ENCODE measurements at regions of chr10 and their contacts with region 1.

Region 1: DNA sequence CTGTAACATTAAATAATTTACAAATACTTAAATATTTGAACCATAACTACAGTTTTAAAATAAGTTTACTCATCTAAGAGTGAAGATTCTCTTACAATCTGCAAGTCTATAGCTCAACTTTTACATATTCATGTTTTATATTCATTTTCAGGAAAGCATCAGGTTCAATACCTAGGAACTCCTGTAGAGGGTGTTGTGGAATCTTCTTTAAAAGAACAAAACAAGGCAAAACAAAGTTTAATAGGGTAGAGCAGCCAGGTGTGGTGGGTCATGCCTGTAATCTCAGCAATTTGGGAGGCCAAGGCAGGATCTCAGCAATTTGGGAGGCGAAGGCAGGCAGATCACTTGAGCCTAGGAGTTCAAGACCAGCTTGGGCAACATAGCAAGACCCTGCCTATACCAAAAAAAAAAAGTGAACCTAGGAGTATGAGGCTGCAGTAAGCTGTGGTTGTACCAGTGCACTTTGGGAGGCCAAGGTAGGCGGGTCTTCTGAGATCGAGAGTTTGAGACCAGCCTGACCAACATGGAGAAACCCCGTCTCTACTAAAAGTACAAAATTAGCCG is 45.1 kb downstream of the ST8SIA6 start:
- DNase-seq: peak in 3 of 9 experiments; percentile 49 to 64 (median 56)
- ATAC-seq: peak; percentile 73
- H3K4me3 ChIP-seq: no peak overlapping the region
- H3K4me3 Mint-ChIP-seq: no peak overlapping the region
- H3K27ac ChIP-seq: no peak overlapping the region
- H3K27ac Mint-ChIP-seq: peak overlapping the region; percentile 53
- H3K4me1 ChIP-seq: peaks cover 15% of the 10 kb centered on the region
- H3K4me1 Mint-ChIP-seq: peaks cover 13% of the 10 kb centered on the region
- H3K27me3 ChIP-seq: no peaks in the 10 kb centered on the region
- H3K27me3 Mint-ChIP-seq: no peaks in the 10 kb centered on the region
- CTCF ChIP-seq: peak; percentile 69

Region 2: DNA sequence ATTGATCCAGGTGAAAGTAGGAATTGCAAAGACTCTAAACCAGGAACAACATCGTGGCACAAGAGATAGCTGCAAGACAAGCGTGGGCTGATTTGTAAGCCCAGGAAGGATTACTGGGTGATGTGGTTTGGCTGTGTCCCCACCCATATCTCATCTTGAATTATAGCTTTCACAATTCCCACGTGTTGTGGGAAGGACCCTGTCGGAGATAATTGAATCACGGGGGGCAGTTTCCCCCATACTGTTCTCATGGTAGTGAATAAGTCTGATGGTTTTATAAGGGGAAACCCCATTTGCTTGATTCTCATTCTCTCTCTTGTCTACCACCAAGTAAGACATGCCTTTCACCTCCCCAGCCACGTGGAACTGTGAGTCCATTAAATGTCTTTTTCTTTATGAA is 14.4 kb before region 1 on chr10:
- CTCF ChIA-PET with region 1: interaction called, 10 read pairs
- POLR2A ChIA-PET with region 1: no interaction called
- intact Hi-C with region 1: no loop called
- DNase-seq: no peak
- ATAC-seq: no peak
- H3K4me3 ChIP-seq: no peak overlapping the region
- H3K4me3 Mint-ChIP-seq: no peak overlapping the region
- H3K27ac ChIP-seq: no peak overlapping the region
- H3K27ac Mint-ChIP-seq: no peak overlapping the region
- H3K4me1 ChIP-seq: no peaks in the 10 kb centered on the region
- H3K4me1 Mint-ChIP-seq: peaks cover 5% of the 10 kb centered on the region
- H3K27me3 ChIP-seq: no peaks in the 10 kb centered on the region
- H3K27me3 Mint-ChIP-seq: peaks cover 26% of the 10 kb centered on the region
- CTCF ChIP-seq: no peak

Region 3: DNA sequence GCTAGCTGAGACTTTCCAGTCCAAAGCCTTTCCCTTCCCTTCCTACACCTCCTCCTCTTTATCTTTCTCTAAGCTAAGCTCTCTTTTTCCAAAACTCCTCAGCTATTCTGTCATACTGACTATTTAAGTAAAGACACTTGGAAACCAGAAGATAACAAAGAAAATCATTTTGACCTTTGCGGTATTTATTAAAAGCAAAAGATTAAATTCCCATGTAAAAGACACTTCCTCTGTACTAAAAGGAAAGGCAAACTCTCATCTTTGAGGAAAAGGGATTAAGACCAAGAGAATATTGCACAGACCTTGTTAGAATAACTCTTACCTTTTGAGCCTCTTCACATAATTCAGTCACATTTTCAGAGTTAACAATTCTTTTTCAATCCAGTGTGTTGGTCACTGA is 29.3 kb after region 1 on chr10:
- CTCF ChIA-PET with region 1: interaction called, 293 read pairs
- POLR2A ChIA-PET with region 1: no interaction called
- intact Hi-C with region 1: no loop called
- DNase-seq: no peak
- ATAC-seq: no peak
- H3K4me3 ChIP-seq: no peak overlapping the region
- H3K4me3 Mint-ChIP-seq: no peak overlapping the region
- H3K27ac ChIP-seq: no peak overlapping the region
- H3K27ac Mint-ChIP-seq: no peak overlapping the region
- H3K4me1 ChIP-seq: no peaks in the 10 kb centered on the region
- H3K4me1 Mint-ChIP-seq: peaks cover 1% of the 10 kb centered on the region
- H3K27me3 ChIP-seq: no peaks in the 10 kb centered on the region
- H3K27me3 Mint-ChIP-seq: peaks cover 16% of the 10 kb centered on the region
- CTCF ChIP-seq: no peak

Region 4: GRCh38 chr10:17460756-17461155 is 51.5 kb after region 1 on chr10:
- CTCF ChIA-PET with region 1: no interaction called
- POLR2A ChIA-PET with region 1: no interaction called
- intact Hi-C with region 1: no loop called
- DNase-seq: no peak
- ATAC-seq: no peak
- H3K4me3 ChIP-seq: no peak overlapping the region
- H3K4me3 Mint-ChIP-seq: no peak overlapping the region
- H3K27ac ChIP-seq: no peak overlapping the region
- H3K27ac Mint-ChIP-seq: no peak overlapping the region
- H3K4me1 ChIP-seq: no peaks in the 10 kb centered on the region
- H3K4me1 Mint-ChIP-seq: no peaks in the 10 kb centered on the region
- H3K27me3 ChIP-seq: no peaks in the 10 kb centered on the region
- H3K27me3 Mint-ChIP-seq: peaks cover 51% of the 10 kb centered on the region
- CTCF ChIP-seq: no peak

Region 5: DNA sequence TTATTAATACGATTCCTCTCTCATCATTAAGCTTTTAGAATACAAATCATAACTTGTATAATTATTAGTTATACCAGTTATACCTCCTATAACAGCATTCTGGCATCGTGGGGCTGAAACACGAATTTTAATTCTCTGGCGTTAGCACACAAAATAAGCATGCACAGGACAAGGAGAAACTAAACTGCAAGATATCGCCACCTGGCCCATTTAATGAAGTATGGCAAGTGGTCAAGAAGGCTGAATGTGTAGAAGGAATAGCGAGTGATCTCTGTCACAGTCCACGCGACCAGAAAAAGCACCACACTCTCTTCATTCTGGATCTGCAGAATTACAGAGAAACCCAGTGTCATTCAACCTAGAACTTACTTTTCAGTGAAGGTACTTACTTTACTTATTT is 189.8 kb after region 1 on chr10:
- CTCF ChIA-PET with region 1: interaction called, 4 read pairs
- POLR2A ChIA-PET with region 1: no interaction called
- intact Hi-C with region 1: loop called in 1 of 2 experiments (anchors 10 kb)
- DNase-seq: peak in 2 of 9 experiments; percentile 30 to 45
- ATAC-seq: no peak
- H3K4me3 ChIP-seq: no peak overlapping the region
- H3K4me3 Mint-ChIP-seq: no peak overlapping the region
- H3K27ac ChIP-seq: no peak overlapping the region
- H3K27ac Mint-ChIP-seq: no peak overlapping the region
- H3K4me1 ChIP-seq: no peaks in the 10 kb centered on the region
- H3K4me1 Mint-ChIP-seq: no peaks in the 10 kb centered on the region
- H3K27me3 ChIP-seq: no peaks in the 10 kb centered on the region
- H3K27me3 Mint-ChIP-seq: peaks cover 6% of the 10 kb centered on the region
- CTCF ChIP-seq: no peak